Posterior vena cava (tissue), 2 donors: ENCODE measurements at regions of chr7 and their contacts with region 1.

Region 1: DNA sequence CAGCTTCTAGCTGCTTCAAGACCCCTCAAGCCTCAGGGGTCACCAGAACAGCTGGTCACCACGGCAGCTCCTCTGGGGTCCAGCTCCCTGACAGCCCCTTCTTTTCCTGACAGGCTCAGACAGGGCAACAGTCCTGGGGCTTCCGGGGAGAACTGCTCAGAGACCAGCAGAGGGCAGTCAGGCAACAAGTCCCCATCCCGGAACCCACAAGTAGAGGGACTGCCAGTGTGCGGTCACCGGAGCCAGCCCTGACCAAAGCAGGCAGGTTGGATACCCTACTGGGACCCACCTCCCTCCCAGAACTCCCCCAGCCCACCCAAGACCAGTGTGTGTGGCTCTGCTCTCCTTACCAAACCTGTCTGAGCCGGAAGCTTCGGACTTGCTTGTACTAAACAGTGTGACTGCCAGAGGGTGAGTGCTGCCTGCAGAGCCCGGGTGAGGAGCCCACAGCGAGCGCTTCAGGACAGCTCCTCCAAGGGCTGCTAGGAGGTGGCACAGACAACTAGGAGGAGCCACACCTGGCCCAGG is 40.3 kb downstream of the YKT6 start:
- DNase-seq: peak; percentile 89

Region 2: GRCh38 chr7:44477063-44477830 is 236.2 kb after region 1 on chr7:
- intact Hi-C with region 1: loop called (anchors 5 kb)
- DNase-seq: no peak

Region 3: GRCh38 chr7:44565097-44565794 is 324.2 kb after region 1 on chr7:
- intact Hi-C with region 1: loop called (anchors 1 to 10 kb)
- DNase-seq: peak; percentile 91